Right ventricle myocardium inferior (tissue), 1 donor: ENCODE measurements at regions of chr2 and their contacts with region 1.

Region 1: DNA sequence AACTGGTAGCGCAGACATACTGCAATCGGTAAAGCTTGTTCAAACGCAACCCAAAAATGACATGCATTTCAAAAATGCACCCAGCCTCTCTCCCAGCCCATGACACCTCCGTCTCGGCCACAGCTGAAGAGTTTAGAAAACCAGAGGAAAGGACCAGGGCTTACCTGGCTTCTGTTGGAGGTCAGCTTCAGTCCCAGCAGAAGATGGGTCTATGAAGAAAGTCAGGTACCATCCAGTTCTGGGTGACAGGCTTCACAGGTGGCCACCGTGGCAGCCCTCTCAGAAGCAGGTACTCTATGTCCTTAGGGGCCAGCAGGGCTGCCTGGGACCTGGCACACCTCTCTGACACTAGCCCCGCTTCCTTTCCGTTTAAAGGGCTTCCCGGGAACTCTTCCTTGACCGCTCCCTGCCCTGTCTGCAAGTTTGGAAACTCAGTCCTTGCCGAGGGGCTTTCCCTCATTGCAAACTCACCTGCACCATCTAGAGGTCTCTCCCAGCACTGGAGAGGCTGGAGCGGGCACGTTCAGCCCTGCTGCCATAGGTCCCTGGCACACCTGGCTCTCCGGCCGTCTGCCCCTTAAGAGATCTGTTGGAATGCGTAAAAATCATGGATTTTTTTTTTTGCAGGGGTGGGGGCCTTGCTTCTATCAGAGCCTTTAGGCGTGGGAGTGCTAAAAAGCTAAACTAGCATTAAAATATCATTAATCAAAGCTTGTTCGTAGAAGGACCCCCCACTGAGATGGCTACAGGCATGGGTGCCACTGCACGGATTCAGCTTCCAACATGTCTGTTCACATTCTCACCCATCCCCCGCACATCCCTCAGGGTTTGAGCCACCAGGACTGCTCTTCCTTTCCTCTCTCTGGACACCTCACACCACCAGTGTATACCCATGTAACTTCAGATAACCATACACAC is at the start of gene EDAR:
- DNase-seq: no peak
- ATAC-seq: peak; percentile 83
- total RNA-seq, gene EDAR: 0.14 TPM

Region 2: GRCh38 chr2:108813732-108814131 is 175.3 kb before region 1 on chr2:
- intact Hi-C with region 1: no loop called
- DNase-seq: no peak
- ATAC-seq: no peak

Region 3: DNA sequence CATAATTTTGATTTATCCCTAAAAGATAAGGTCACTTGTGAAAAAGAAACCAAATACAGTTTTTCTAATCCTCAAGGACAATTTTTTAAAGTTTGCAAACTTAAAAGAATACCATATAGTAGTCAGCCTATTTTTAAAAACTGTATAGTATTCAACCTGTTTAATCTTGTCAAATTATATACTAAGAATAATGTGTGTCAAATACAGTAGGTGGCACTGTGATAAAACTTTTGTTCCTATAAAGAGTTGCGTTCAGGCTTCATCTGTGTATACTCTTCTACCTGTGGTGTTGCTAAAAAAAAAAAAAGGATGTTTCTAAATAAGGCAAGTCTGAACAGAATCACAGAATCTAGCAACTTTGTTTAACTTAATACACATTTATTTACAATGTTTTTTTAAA is 133.9 kb before region 1 on chr2:
- intact Hi-C with region 1: loop called (anchors 2 kb)
- DNase-seq: no peak
- ATAC-seq: peak; percentile 34

Region 4: DNA sequence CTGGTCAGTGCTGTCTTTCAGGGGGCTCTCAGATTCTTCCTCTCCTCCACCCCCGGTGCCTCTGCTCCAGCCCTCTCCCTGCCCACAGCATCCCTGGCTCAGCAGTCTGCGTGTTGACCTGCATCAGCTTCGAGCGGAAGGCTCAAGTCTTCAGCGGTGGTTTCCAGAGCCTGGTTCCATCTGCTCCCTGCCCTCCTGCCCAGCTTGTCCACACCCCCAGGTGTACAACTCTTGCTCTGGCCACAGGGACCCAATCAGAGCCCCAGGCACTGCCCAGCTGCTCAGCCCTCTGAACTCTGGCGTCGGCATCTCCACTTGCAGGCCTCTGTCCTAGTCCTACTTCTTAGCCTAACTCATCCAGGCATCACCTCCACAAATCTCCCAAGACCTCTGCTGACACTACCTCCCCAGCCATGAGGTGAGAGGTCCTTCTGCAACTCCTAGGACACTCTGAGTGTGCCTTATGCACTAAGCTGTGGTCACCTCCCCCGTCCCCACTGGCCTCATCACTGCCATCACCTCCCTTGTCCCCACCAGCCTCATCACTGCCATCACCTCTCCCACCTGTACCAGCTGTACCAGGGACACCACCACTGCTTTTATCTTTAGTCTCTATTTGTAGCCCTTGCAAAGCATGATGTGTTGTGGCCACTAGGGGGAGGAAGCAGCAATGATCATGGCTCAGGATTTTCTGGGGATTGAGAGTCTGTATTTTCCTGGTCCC is 61.0 kb before region 1 on chr2:
- intact Hi-C with region 1: loop called (anchors 2 kb)
- DNase-seq: peak; percentile 21
- ATAC-seq: no peak